Transverse colon (tissue), 4 donors: ENCODE measurements at regions of chr10 and their contacts with region 1.

Region 1: GRCh38 chr10:76251841-76252671 is 820.6 kb downstream of the LRMDA start:
- DNase-seq: peak; percentile 71
- H3K4me3 ChIP-seq: no peak overlapping the region
- H3K27ac ChIP-seq: peak overlapping the region; percentile 52 to 87 (median 65)
- H3K4me1 ChIP-seq: peaks cover 0 to 8% (median 0%) of the 10 kb centered on the region in 4 donors
- H3K27me3 ChIP-seq: no peaks in the 10 kb centered on the region
- CTCF ChIP-seq: no peak
- EP300 ChIP-seq: peak; percentile 91
- POLR2A ChIP-seq: no peak

Region 2: GRCh38 chr10:76071653-76072365 is 180.2 kb before region 1 on chr10:
- in situ Hi-C with region 1: no loop called
- intact Hi-C with region 1: no loop called
- DNase-seq: no peak
- H3K4me3 ChIP-seq: no peak overlapping the region
- H3K27ac ChIP-seq: peak overlapping the region in 1 of 4 donors; percentile 33
- H3K4me1 ChIP-seq: peaks cover 0 to 18% (median 5%) of the 10 kb centered on the region in 4 donors
- H3K27me3 ChIP-seq: no peaks in the 10 kb centered on the region
- CTCF ChIP-seq: no peak
- EP300 ChIP-seq: no peak
- POLR2A ChIP-seq: no peak

Region 3: GRCh38 chr10:76336213-76336963 is 84.3 kb after region 1 on chr10:
- in situ Hi-C with region 1: no loop called
- intact Hi-C with region 1: loop called (anchors 10 kb)
- DNase-seq: peak; percentile 21
- H3K4me3 ChIP-seq: no peak overlapping the region
- H3K27ac ChIP-seq: peak overlapping the region; percentile 60 to 79 (median 68)
- H3K4me1 ChIP-seq: peaks cover 5 to 34% (median 27%) of the 10 kb centered on the region in 4 donors
- H3K27me3 ChIP-seq: no peaks in the 10 kb centered on the region
- CTCF ChIP-seq: no peak
- EP300 ChIP-seq: no peak
- POLR2A ChIP-seq: no peak

Region 4: GRCh38 chr10:76523246-76523645 is 271.2 kb after region 1 on chr10:
- in situ Hi-C with region 1: no loop called
- intact Hi-C with region 1: loop called (anchors 1 kb)
- DNase-seq: no peak
- H3K4me3 ChIP-seq: no peak overlapping the region
- H3K27ac ChIP-seq: peak overlapping the region; percentile 21 to 82 (median 60)
- H3K4me1 ChIP-seq: peaks cover 0 to 12% (median 0%) of the 10 kb centered on the region in 4 donors
- H3K27me3 ChIP-seq: no peaks in the 10 kb centered on the region
- CTCF ChIP-seq: no peak
- EP300 ChIP-seq: no peak
- POLR2A ChIP-seq: no peak